ENCODE measurements at regions of chr1 and their contacts with region 1.

Region 1: GRCh38 chr1:93909146-93910050 is at the start of gene GCLM:
- DNase-seq: peak; percentile 84 to 90
- ATAC-seq: peak; percentile 92 to 98
- H3K4me3 ChIP-seq: peak within 1 kb of the TSS; percentile 66 to 76 (median 72)
- H3K27ac ChIP-seq: peak within 1 kb of the TSS; percentile 79 to 89 (median 84)
- H3K4me1 ChIP-seq: peaks cover 14 to 27% of the 10 kb centered on the region in 2 donors
- H3K27me3 ChIP-seq: no peaks in the 10 kb centered on the region
- CTCF ChIP-seq: peak; percentile 79 to 98 (median 97)
- POLR2A ChIP-seq: peak; percentile 60 to 64
- total RNA-seq, gene GCLM: 20.9 to 26.7 (median 24.1) TPM

Region 2: GRCh38 chr1:93878889-93879586 is 30.4 kb before region 1 on chr1 and contains the start of gene DNTTIP2:
- in situ Hi-C with region 1: no loop called
- intact Hi-C with region 1: loop called (anchors 1 kb)
- DNase-seq: peak; percentile 80 to 84
- ATAC-seq: peak; percentile 94 to 97
- H3K4me3 ChIP-seq: peak within 1 kb of the TSS; percentile 80 to 99 (median 87)
- H3K27ac ChIP-seq: peak within 1 kb of the TSS; percentile 91 to 98 (median 94)
- H3K4me1 ChIP-seq: peaks cover 30 to 35% of the 10 kb centered on the region in 2 donors
- H3K27me3 ChIP-seq: no peaks in the 10 kb centered on the region
- CTCF ChIP-seq: no peak
- POLR2A ChIP-seq: peak; percentile 84 to 89
- total RNA-seq, gene DNTTIP2: 50.4 to 75.3 (median 59.1) TPM

Measured in gastrocnemius medialis (tissue), 4 donors.